Astrocyte of the cerebellum (primary cell): ENCODE measurements at regions of chr21 and their contacts with region 1.

Region 1: GRCh38 chr21:26288026-26288425 is 117.5 kb upstream of the APP start:
- DNase-seq: no peak
- H3K4me3 ChIP-seq: no peak overlapping the region
- CTCF ChIP-seq: no peak

Region 2: DNA sequence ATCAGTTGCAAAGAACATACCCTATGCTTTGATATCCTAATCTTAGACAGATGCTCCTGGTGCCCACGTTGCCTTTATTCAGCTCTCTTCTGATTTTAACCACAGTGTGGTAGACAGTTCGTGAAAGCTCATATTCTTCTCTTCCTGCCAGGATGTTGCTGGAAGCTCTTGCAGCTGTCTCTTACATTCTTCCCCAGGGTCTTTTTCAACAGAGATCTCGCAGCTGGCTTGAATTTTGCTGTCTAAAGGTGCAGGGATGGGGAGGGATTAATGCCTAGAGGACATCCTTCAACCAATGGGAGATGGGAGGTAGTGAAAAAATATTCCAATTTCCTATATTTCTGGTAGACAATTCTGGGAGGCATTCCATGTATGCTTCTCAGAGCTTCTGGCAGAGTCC is 32.6 kb after region 1 on chr21:
- in situ Hi-C with region 1: loop called (anchors 5 kb)
- DNase-seq: no peak
- H3K4me3 ChIP-seq: no peak overlapping the region
- CTCF ChIP-seq: no peak